Psoas muscle (tissue), 8 donors: ENCODE measurements at regions of chrX and their contacts with region 1.

Region 1: DNA sequence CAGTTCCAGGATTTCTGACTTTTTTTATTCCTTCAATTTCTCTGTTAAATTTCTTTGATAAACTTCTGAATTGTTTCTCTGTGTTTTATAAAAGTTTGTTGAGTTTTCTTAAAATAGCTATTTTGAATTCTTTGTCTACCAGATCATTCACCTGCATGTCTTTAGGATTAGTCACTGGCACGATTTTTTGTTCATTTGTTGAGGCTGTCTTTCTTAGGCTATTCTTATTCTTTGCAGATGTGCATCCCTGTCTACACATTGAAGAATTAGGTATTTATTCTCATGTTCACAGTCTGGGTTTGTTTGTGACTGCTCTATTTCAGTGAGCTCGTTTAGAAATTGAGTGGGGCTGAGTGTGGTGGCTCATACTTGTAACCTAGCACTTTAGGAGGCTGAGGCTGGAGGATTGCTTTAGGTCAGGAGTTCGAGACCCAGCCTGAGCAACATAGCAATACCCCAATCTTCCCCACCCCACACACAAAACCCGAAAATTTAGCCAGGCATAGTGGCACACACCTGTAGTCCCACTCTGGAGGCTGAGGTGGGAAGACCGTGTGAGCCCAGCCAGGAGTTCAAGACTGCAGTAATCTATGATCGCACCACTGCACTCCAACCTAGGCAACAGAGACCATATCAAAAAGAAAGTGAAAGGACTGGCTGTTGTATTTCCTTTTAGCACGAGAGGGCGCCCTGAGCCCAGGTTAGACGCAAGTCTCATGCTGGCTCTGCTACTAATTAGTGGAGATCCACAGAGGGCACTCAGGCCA is 42.0 kb downstream of the F8 start:
- DNase-seq: peak; percentile 57 to 68
- ATAC-seq: peak; percentile 77 to 95 (median 86)
- H3K4me3 ChIP-seq: peak overlapping the region; percentile 53
- H3K27ac ChIP-seq: no peak overlapping the region
- H3K4me1 ChIP-seq: no peaks in the 10 kb centered on the region
- H3K27me3 ChIP-seq: no peaks in the 10 kb centered on the region
- CTCF ChIP-seq: peak; percentile 64

Region 2: DNA sequence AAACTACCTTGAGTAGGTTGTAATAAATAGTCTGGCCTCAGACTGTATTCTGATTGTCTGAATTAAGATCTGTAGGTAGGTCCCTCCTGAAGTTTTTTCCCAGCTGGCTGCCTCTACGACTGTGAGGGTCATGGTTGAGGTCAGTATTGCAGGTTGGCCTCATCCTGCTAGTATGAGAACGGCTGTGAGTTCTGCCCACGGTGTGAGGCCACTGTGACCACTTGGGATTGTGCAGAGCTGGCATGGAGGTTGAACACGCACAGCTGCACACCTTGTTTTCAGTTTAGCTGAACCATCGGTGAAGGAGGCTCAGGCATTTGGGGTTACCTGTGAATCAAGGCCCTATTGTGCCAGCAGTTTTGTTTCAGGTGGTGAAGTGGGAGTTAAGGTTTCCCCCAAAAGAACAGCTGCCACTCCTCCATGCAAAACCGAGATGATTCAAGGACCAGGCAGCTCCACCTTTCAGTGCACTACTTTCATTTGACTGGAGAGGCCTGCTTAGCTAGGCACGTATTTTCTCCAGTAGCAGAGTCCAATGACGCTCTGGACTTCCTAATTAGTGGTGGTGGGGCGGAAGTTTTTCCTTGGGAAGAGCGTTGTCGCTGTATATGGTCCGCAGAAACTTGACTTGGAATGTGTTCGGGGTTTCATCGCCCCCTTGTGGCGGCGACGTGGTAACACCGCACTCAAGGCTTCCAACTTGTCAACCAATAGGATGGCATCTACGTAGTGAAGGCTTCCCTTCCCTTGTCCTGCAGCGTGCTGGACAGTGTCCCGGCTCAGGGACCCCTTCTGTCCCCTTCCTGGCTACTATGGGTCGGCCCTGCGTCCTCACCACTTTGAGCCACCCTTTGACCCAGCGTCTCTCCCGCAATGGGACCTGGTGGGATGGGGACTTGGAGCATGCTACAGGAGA is 76.6 kb after region 1 on chrX:
- intact Hi-C with region 1: loop called (anchors 2 to 10 kb)
- DNase-seq: peak; percentile 48 to 77
- ATAC-seq: peak; percentile 88 to 94 (median 90)
- H3K4me3 ChIP-seq: no peak overlapping the region
- H3K27ac ChIP-seq: peak overlapping the region; percentile 61
- H3K4me1 ChIP-seq: no peaks in the 10 kb centered on the region
- H3K27me3 ChIP-seq: no peaks in the 10 kb centered on the region
- CTCF ChIP-seq: peak; percentile 77

Region 3: DNA sequence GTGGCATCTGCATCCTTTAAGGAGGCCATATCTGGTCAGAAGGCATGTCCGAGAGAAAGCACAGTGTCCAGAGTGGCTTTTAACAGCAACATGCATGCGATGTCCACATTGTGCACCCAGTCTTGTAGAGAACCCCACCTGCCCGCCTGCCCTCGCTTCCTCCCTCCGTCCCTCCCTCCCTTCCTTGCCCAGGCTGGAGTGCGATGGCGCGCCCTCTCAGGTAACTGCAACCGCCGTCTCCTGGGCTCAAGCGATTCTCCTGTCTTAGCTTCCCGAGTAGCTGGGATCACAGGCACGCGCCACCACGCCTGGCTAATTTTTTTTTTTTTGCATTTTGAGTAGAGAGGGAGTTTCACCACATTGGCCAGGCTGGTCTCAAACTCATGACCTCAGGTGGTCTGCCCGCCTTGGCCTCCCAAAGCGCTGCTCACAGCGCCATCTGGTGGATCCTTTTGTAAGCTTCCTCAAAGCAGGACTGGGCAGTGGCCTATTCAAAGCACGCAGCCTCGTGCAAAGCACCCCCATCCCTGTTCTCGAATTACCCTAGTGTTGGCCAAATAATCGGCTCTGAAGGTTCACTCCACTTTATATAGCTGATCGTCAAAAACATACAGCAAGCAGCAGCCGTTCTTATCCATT is 105.8 kb after region 1 on chrX:
- intact Hi-C with region 1: loop called (anchors 5 to 10 kb)
- DNase-seq: peak in 1 of 2 donors; percentile 59
- ATAC-seq: peak in 3 of 4 donors; percentile 57 to 80 (median 59)
- H3K4me3 ChIP-seq: no peak overlapping the region
- H3K27ac ChIP-seq: no peak overlapping the region
- H3K4me1 ChIP-seq: no peaks in the 10 kb centered on the region
- H3K27me3 ChIP-seq: no peaks in the 10 kb centered on the region
- CTCF ChIP-seq: peak; percentile 40

Region 4: GRCh38 chrX:155148724-155149537 is 168.4 kb after region 1 on chrX:
- intact Hi-C with region 1: no loop called
- DNase-seq: no peak
- ATAC-seq: no peak
- H3K4me3 ChIP-seq: no peak overlapping the region
- H3K27ac ChIP-seq: no peak overlapping the region
- H3K4me1 ChIP-seq: no peaks in the 10 kb centered on the region
- H3K27me3 ChIP-seq: no peaks in the 10 kb centered on the region
- CTCF ChIP-seq: peak; percentile 35

Region 5: DNA sequence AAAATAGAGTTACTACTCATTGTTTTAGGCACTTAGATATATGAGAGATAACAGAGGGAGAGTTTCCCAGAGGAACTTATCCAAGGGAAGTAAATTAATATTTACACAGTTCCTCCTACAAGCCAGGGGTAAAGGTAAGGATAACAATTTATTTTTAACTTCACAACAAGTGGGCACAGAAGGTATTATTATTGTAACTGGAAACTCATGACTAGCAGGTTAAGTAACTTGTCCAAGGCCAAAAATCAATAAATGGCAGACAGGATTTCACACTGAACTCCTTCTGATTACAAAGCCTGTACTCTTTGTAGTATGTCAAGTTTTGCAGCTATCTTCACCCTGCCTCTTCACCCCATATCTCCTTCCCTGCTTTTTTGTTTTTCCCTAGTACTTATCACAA is 524.8 kb after region 1 on chrX:
- intact Hi-C with region 1: no loop called
- DNase-seq: no peak
- ATAC-seq: no peak
- H3K4me3 ChIP-seq: no peak overlapping the region
- H3K27ac ChIP-seq: no peak overlapping the region
- H3K4me1 ChIP-seq: no peaks in the 10 kb centered on the region
- H3K27me3 ChIP-seq: no peaks in the 10 kb centered on the region
- CTCF ChIP-seq: no peak